GM13976 (cell line): ENCODE measurements at regions of chr6 and their contacts with region 1.

Region 1: DNA sequence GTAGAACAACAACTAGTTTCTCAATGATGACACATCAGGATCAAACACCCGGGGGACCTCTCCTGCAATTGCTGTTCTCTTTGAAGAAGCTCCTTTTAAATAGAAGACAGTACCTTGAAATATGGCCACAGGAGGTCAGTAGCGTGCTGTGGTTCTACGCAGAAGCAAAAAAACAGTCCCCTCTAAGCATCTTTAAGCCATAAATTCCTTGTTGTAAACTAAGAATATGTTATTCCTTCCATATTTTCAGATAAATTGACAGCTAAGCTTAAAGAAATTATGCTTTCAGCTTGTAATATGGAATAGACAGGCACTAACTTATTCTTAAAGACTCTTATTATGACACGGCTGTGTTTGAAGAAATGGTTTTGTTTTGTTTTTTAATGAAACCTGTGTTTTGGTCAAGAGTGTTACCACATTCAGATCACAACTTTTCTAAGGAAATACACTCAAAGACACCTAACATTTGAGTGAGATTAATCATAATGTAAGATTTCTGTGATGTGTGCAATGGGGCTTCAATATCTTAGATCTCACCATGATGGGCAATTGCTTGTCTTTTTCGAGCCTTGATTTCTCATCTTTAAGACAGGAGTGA is 49.7 kb upstream of the IL20RA start:
- DNase-seq: peak; percentile 34
- CTCF ChIP-seq: peak; percentile 53

Region 2: GRCh38 chr6:137313928-137314855 is 219.7 kb after region 1 on chr6:
- in situ Hi-C with region 1: loop called (anchors 5 kb)
- DNase-seq: peak; percentile 49
- CTCF ChIP-seq: peak; percentile 84